B cell (primary cell): ENCODE measurements at regions of chr9 and their contacts with region 1.

Region 1: DNA sequence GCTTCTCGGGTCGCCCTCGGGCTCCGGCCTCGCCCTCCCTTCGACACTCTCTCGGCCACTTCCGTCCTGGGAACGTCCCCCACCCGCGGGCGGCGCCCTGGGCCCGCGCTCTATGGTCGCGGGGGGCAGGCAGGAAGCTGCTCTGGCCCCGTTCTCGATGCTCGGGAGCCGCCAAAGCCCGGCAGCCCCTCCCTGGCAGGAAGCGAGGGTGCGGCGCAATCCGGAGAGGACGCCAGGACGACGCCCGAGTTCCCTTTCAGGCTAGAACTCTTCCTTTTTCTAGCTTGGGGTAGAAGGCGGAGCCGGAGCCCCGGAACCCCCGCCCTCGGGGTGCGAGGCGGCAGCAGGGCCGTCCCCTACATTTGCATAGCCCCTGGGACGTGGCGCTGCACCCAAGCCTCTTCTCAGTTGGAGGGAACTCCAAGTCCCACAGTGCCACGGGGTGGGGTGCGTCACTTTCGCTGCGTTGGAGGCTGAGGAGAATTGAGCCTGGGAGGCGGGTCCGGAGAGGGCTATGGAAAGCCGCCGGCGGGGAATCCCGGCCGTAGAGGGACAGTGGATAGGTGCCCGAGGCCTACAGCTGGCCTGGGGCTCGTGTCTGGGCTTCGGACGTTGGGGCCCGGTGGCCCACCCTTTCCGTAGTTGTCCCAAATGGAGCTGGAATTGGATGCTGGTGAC is at the starts of genes CREB3 and TLN1:
- DNase-seq: peak; percentile 98
- ATAC-seq: peak; percentile 87
- H3K4me3 ChIP-seq: peak within 1 kb of the TSS; percentile 52 to 87 (median 82)
- H3K4me3 Mint-ChIP-seq: no peak within 1 kb of the TSS
- H3K27ac ChIP-seq: peak within 1 kb of the TSS; percentile 69 to 92
- H3K27ac Mint-ChIP-seq: peak within 1 kb of the TSS; percentile 96
- H3K4me1 ChIP-seq: peaks cover 53 to 61% of the 10 kb centered on the region in 2 donors
- H3K4me1 Mint-ChIP-seq: peaks cover 12% of the 10 kb centered on the region
- H3K27me3 ChIP-seq: no peaks in the 10 kb centered on the region
- H3K27me3 Mint-ChIP-seq: no peaks in the 10 kb centered on the region
- CTCF ChIP-seq: no peak
- total RNA-seq, gene CREB3: 18.1 and 20.7 TPM in 2 replicates
- total RNA-seq, gene TLN1: 272 and 280 TPM in 2 replicates

Region 2: DNA sequence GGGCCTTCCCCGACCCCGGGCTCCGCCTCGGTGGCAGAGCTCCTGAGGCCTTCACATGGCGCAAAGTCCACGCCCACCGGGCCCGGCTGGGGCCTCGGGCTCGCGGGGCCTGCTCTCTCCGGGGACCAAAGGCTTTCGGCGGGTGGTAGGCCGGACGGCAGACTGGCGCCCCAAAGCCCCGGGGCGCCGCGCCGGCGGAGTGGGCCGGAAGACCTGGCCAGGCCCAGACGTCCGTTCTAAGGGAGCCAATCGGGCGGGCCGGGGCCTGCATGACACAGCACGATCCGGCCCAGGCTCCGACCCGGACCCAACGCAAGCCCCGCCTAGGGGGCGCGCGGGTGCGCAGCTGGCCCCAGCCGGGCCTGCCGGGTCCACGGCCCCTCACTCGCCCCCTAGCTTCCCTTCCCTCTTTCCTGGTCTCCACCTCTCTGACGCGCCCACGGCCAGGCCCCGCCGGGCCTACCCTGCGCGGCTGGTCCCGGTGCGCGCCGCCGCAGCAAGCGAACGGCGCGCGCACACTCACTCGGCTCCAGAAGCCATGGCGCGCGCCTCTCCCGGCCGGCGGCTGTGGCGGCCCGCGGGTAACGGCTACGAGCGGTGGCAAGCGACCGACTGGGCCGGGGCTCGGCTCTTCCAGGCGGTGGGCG is 660.3 kb before region 1 on chr9:
- CTCF ChIA-PET with region 1: no interaction called
- POLR2A ChIA-PET with region 1: no interaction called
- intact Hi-C with region 1: loop called (anchors 10 kb)
- DNase-seq: peak; percentile 89
- ATAC-seq: peak; percentile 64
- H3K4me3 ChIP-seq: peak overlapping the region; percentile 73 to 96 (median 86)
- H3K4me3 Mint-ChIP-seq: peak overlapping the region; percentile 89
- H3K27ac ChIP-seq: peak overlapping the region; percentile 84 to 97
- H3K27ac Mint-ChIP-seq: peak overlapping the region; percentile 90
- H3K4me1 ChIP-seq: peaks cover 40 to 45% of the 10 kb centered on the region in 2 donors
- H3K4me1 Mint-ChIP-seq: peaks cover 49% of the 10 kb centered on the region
- H3K27me3 ChIP-seq: no peaks in the 10 kb centered on the region
- H3K27me3 Mint-ChIP-seq: no peaks in the 10 kb centered on the region
- CTCF ChIP-seq: peak; percentile 52

Region 3: GRCh38 chr9:35616681-35617459 is 115.4 kb before region 1 on chr9:
- CTCF ChIA-PET with region 1: interaction called, 20 read pairs
- POLR2A ChIA-PET with region 1: interaction called, 14 read pairs
- intact Hi-C with region 1: no loop called
- DNase-seq: peak; percentile 82
- ATAC-seq: peak; percentile 11
- H3K4me3 ChIP-seq: peak overlapping the region; percentile 80 to 91 (median 90)
- H3K4me3 Mint-ChIP-seq: peak overlapping the region; percentile 86
- H3K27ac ChIP-seq: peak overlapping the region; percentile 95 to 97
- H3K27ac Mint-ChIP-seq: peak overlapping the region; percentile 86
- H3K4me1 ChIP-seq: peaks cover 79 to 95% of the 10 kb centered on the region in 2 donors
- H3K4me1 Mint-ChIP-seq: peaks cover 94% of the 10 kb centered on the region
- H3K27me3 ChIP-seq: no peaks in the 10 kb centered on the region
- H3K27me3 Mint-ChIP-seq: no peaks in the 10 kb centered on the region
- CTCF ChIP-seq: peak; percentile 21

Region 4: GRCh38 chr9:35696525-35697215 is 35.6 kb before region 1 on chr9:
- CTCF ChIA-PET with region 1: interaction called, 115 read pairs
- POLR2A ChIA-PET with region 1: no interaction called
- intact Hi-C with region 1: loop called (anchors 2 kb)
- DNase-seq: peak; percentile 78
- ATAC-seq: peak; percentile 97
- H3K4me3 ChIP-seq: no peak overlapping the region
- H3K4me3 Mint-ChIP-seq: no peak overlapping the region
- H3K27ac ChIP-seq: no peak overlapping the region
- H3K27ac Mint-ChIP-seq: peak overlapping the region; percentile 79
- H3K4me1 ChIP-seq: peaks cover 0 to 7% of the 10 kb centered on the region in 2 donors
- H3K4me1 Mint-ChIP-seq: peaks cover 8% of the 10 kb centered on the region
- H3K27me3 ChIP-seq: no peaks in the 10 kb centered on the region
- H3K27me3 Mint-ChIP-seq: no peaks in the 10 kb centered on the region
- CTCF ChIP-seq: peak; percentile 91

Region 5: GRCh38 chr9:35790385-35791296 is 58.4 kb after region 1 on chr9:
- CTCF ChIA-PET with region 1: interaction called, 19 read pairs
- POLR2A ChIA-PET with region 1: no interaction called
- intact Hi-C with region 1: no loop called
- DNase-seq: peak; percentile 79
- ATAC-seq: peak; percentile 92
- H3K4me3 ChIP-seq: no peak overlapping the region
- H3K4me3 Mint-ChIP-seq: peak overlapping the region; percentile 41
- H3K27ac ChIP-seq: no peak overlapping the region
- H3K27ac Mint-ChIP-seq: peak overlapping the region; percentile 26
- H3K4me1 ChIP-seq: peaks cover 5% of the 10 kb centered on the region in 2 donors
- H3K4me1 Mint-ChIP-seq: peaks cover 9% of the 10 kb centered on the region
- H3K27me3 ChIP-seq: peaks cover 0 to 6% (median 3%) of the 10 kb centered on the region in 4 experiments
- H3K27me3 Mint-ChIP-seq: peaks cover 4% of the 10 kb centered on the region
- CTCF ChIP-seq: peak; percentile 93

Region 6: DNA sequence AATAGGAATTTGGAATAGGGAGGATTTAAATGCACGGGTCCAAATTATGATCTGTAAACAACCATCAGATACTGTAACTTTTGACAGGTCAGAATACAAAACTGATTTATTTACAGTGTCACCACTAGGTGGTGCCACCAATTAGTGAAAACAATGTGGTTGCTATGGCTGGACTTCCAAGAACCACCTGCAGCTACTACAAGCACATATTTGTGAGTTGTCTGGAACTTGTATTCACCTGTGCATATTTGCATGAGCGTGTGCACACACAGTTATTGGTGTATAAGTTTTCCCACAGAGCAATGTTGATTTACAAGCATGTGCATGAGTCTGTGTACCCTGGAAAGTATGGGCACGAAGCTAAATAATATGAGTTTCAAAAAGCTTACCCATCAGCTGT is 170.8 kb after region 1 on chr9:
- CTCF ChIA-PET with region 1: no interaction called
- POLR2A ChIA-PET with region 1: no interaction called
- intact Hi-C with region 1: no loop called
- DNase-seq: peak; percentile 66
- ATAC-seq: peak; percentile 51
- H3K4me3 ChIP-seq: no peak overlapping the region
- H3K4me3 Mint-ChIP-seq: no peak overlapping the region
- H3K27ac ChIP-seq: no peak overlapping the region
- H3K27ac Mint-ChIP-seq: no peak overlapping the region
- H3K4me1 ChIP-seq: no peaks in the 10 kb centered on the region
- H3K4me1 Mint-ChIP-seq: no peaks in the 10 kb centered on the region
- H3K27me3 ChIP-seq: peaks cover 0 to 10% (median 1%) of the 10 kb centered on the region in 4 experiments
- H3K27me3 Mint-ChIP-seq: peaks cover 35% of the 10 kb centered on the region
- CTCF ChIP-seq: peak; percentile 90

Region 7: DNA sequence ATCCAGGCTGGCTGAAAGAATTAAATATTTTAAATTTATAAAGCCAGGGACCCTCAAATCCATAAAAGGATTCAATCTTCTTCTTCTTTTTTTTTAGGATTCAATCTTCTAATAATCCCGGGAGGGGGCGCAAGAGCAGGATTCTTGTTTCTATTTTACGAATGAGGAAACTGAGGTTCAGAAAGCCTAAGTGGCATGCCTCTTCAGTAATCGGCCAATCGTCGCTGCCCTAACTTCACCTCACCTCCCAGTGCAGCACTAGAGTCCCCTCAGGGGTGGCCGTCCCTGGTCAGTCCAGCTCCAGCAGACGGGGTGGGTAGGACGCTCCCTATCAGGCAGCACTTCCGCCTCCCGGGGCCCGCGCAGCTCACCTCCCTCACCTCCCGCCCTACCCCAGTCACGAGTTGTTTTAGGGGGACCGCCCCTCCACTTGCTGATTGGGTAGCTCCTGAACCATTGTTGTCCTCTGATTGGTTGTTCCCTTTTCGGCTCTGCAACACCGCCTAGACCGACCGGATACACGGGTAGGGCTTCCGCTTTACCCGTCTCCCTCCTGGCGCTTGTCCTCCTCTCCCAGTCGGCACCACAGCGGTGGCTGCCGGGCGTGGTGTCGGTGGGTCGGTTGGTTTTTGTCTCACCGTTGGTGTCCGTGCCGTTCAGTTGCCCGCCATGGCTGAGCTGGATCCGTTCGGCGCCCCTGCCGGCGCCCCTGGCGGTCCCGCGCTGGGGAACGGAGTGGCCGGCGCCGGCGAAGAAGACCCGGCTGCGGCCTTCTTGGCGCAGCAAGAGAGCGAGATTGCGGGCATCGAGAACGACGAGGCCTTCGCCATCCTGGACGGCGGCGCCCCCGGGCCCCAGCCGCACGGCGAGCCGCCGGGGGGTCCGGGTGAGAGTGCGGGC is 458.4 kb after region 1 on chr9 and contains the start of gene CLTA:
- CTCF ChIA-PET with region 1: no interaction called
- POLR2A ChIA-PET with region 1: no interaction called
- intact Hi-C with region 1: loop called (anchors 5 kb)
- DNase-seq: peak; percentile 97
- ATAC-seq: peak; percentile 97
- H3K4me3 ChIP-seq: peak within 1 kb of the TSS; percentile 66 to 96 (median 91)
- H3K4me3 Mint-ChIP-seq: peak within 1 kb of the TSS; percentile 91
- H3K27ac ChIP-seq: peak within 1 kb of the TSS; percentile 76 to 93
- H3K27ac Mint-ChIP-seq: peak within 1 kb of the TSS; percentile 88
- H3K4me1 ChIP-seq: peaks cover 32 to 43% of the 10 kb centered on the region in 2 donors
- H3K4me1 Mint-ChIP-seq: peaks cover 53% of the 10 kb centered on the region
- H3K27me3 ChIP-seq: no peaks in the 10 kb centered on the region
- H3K27me3 Mint-ChIP-seq: no peaks in the 10 kb centered on the region
- CTCF ChIP-seq: peak; percentile 62
- total RNA-seq, gene CLTA: 71.0 and 73.0 TPM in 2 replicates